G401 (cell line): ENCODE measurements at regions of chr5 and their contacts with region 1.

Region 1: DNA sequence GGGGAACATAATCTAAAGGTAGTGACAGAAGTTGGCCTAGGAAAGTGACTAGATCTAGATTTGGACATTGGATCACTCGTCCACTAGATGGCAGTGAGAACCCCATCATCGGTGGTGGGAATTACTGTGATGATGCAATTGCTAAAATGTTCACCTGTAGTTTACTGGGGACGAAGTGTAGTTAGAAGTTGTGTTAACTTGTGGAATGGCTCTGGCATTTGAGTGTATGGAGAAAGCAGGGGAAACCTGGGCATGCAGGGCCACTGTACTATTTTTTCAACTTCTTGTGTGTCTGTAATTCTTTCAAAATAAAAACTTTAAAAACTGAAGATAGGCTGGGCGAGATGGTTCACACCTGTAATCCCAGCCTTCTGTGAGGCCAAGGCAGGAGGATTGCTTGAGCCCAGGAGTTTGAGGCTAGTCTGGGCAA is 75.5 kb downstream of the PHAX start:
- DNase-seq: peak; percentile 85

Region 2: GRCh38 chr5:126600631-126601511 is 75.3 kb before region 1 on chr5 and contains the start of gene PHAX:
- in situ Hi-C with region 1: no loop called
- DNase-seq: peak; percentile 80
- total RNA-seq, gene PHAX: 42.7 and 50.5 TPM in 2 replicates

Region 3: DNA sequence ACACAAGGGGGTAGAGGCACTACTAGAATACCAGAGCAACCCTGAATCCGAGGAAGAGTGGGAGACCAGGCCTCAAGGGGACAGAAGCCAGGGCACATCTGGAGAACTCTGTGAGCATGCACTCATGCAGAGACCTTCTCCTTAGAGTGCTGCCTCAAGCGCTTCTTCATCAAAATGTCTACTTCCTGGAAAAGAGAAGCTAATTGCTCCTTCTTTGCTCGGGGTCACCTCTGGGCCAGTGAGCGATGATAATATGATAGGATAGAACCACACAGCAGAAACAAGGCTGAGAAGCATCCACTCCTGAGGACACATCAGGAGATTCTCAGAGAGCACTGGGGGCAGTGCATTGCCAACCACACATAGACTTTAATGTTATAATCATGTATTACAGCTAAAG is 77.0 kb after region 1 on chr5:
- in situ Hi-C with region 1: no loop called
- DNase-seq: no peak

Region 4: DNA sequence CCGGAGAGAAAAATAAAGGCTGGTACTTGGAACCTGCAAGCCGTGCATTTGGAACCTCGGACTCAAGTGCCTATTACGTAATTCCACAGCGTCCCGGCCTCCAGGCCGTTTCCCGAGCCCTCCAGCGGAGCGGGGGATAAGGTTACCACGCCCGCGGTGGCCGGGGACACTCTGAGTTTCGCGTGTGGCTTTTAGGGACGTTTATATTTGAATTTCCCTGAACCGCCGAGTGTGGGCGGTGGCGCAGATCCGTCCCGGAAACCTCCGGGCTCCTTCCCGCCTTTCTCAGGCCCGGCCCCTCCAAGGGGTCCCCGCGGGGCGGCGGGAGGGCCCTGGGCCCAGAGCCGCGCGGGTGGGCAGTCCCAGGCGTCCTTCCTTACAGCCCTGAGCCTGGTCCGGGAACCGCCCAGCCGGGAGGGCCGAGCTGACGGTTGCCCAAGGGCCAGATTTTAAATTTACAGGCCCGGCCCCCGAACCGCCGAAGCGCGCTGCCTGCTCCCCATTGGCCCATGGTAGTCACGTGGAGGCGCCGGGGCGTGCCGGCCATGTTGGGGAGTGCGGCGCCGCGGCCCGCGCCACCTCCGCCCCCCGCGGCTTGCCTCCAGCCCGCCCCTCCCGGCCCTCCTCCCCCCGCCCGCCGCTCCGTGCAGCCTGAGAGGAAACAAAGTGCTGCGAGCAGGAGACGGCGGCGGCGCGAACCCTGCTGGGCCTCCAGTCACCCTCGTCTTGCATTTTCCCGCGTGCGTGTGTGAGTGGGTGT is 100.5 kb after region 1 on chr5 and contains the start of gene LMNB1:
- in situ Hi-C with region 1: loop called (anchors 25 kb)
- DNase-seq: peak; percentile 93
- total RNA-seq, gene LMNB1: 167 and 250 TPM in 2 replicates